Cardiac septum (tissue), 1 donor: ENCODE measurements at regions of chr9 and their contacts with region 1.

Region 1: GRCh38 chr9:125558453-125559092 is 148.4 kb downstream of the MAPKAP1 start:
- DNase-seq: no peak

Region 2: GRCh38 chr9:125272697-125273096 is 285.9 kb before region 1 on chr9:
- intact Hi-C with region 1: no loop called
- DNase-seq: no peak

Region 3: DNA sequence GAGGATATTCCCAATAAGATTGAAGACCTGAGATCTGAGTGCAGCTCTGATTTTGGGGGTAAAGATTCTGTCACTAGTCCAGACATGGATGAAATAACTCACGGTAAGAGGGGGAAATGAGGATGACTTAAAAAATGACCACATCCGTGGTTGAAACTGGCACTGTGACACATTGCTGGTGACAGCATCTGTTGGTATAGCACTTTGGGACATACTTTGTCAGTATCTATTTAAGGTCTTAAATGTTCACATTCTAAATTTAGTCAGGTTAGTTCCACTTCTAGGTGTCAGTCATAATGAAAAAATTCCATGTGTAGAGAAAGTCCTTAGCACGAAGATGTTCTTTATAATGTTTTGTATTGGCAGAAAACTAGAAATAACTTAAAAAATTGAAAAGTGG is 226.0 kb before region 1 on chr9:
- intact Hi-C with region 1: no loop called
- DNase-seq: no peak

Region 4: GRCh38 chr9:125612616-125613540 is 54.3 kb after region 1 on chr9:
- intact Hi-C with region 1: no loop called
- DNase-seq: no peak

Region 5: GRCh38 chr9:125631391-125632085 is 73.0 kb after region 1 on chr9:
- intact Hi-C with region 1: loop called (anchors 5 kb)
- DNase-seq: no peak

Region 6: GRCh38 chr9:126228781-126229444 is 670.3 kb after region 1 on chr9:
- intact Hi-C with region 1: loop called (anchors 10 kb)
- DNase-seq: peak; percentile 83